ENCODE measurements at regions of chr5 and their contacts with region 1.

Region 1: GRCh38 chr5:176530983-176531821 is 6.0 kb downstream of the RNF44 start:
- DNase-seq: peak; percentile 85
- H3K4me3 ChIP-seq: no peak overlapping the region
- H3K27ac ChIP-seq: peak overlapping the region in 1 of 2 experiments; percentile 79; a peak in 2 of 4 replicates
- H3K4me1 ChIP-seq: peaks cover 13 to 52% of the 10 kb centered on the region in 2 experiments; a peak in 3 of 4 replicates
- H3K27me3 ChIP-seq: no peaks in the 10 kb centered on the region
- CTCF ChIP-seq: no peak
- EP300 ChIP-seq: peak in 1 of 2 experiments; percentile 16; a peak in 1 of 4 replicates
- RAD21 ChIP-seq: no peak

Region 2: DNA sequence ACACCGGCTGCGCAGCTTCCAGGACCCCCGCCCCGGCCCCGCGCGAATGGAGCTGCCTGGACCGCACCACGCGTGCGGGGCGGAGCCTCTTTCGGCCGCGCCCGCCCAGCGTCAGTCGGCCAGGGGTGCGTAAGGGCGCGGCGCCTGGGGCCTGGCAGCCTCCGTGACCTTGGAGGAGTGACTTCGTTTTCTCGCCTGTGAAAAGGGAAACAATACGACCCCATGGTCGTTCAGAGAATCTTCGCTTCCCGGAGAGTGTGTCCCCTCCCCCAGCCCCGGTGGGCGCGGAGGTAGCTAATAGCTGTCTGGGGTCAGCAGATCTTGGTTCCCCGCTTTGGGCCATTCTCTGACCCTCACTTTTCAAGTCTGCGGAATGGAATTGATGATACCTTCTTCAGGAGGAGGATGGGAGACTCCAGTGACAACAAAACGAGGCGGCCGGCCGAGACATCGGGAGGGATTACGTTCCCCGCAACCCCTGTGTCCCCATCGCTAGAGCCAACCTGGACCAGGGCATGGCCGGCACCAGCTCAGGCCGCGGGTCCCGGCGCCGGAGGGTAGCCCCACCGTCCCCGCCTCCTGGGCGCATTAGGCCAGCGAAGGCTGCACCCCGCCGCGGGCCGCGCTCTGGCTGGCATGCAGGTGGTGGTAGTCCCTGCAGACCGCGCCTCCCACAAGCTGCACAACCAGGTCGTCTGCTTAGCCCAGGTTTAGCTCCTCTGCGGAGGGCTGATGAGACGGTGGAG is 12.4 kb after region 1 on chr5:
- CTCF ChIA-PET with region 1: interaction called, 12 read pairs
- POLR2A ChIA-PET with region 1: interaction called, 6 read pairs
- DNase-seq: peak; percentile 89
- H3K4me3 ChIP-seq: peak overlapping the region; percentile 65 to 76
- H3K27ac ChIP-seq: peak overlapping the region in 1 of 2 experiments; percentile 72; a peak in 2 of 4 replicates
- H3K4me1 ChIP-seq: peaks cover 10 to 14% of the 10 kb centered on the region in 2 experiments; a peak in 2 of 4 replicates
- H3K27me3 ChIP-seq: no peaks in the 10 kb centered on the region
- CTCF ChIP-seq: no peak
- EP300 ChIP-seq: no peak
- RAD21 ChIP-seq: no peak

Region 3: DNA sequence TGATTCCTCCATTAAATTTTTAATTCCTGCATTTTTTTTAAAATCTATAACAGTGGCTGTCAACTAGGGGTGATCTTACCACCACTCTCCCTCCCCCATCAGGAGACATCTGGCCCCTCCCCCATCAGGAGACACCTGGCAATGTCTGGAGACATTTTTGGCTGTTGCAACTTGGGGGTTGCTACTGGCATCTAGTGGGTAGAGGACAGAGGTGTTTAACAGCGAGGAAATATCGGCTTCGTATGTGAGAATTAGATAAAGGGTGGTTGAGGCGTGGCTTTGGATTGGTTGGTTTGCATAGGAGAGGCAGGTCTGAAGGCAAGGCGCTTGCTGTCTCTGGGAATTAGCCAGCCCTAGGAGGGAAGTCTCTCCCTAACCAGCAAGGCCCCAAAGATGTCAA is 28.5 kb after region 1 on chr5:
- CTCF ChIA-PET with region 1: no interaction called
- POLR2A ChIA-PET with region 1: no interaction called
- DNase-seq: no peak
- H3K4me3 ChIP-seq: no peak overlapping the region
- H3K27ac ChIP-seq: no peak overlapping the region
- H3K4me1 ChIP-seq: no peaks in the 10 kb centered on the region
- H3K27me3 ChIP-seq: no peaks in the 10 kb centered on the region
- CTCF ChIP-seq: no peak
- EP300 ChIP-seq: no peak
- RAD21 ChIP-seq: no peak

Region 4: GRCh38 chr5:176609724-176610434 is 78.7 kb after region 1 on chr5 and contains the start of gene GPRIN1:
- CTCF ChIA-PET with region 1: no interaction called
- POLR2A ChIA-PET with region 1: no interaction called
- DNase-seq: peak; percentile 98
- H3K4me3 ChIP-seq: peak within 1 kb of the TSS; percentile 68 to 69
- H3K27ac ChIP-seq: peak within 1 kb of the TSS in 1 of 2 experiments; percentile 83; a peak in 2 of 4 replicates
- H3K4me1 ChIP-seq: peaks cover 3 to 49% of the 10 kb centered on the region in 2 experiments; a peak in 2 of 4 replicates
- H3K27me3 ChIP-seq: no peaks in the 10 kb centered on the region
- CTCF ChIP-seq: peak; percentile 41; the same call in 1 of the 2 replicates
- EP300 ChIP-seq: no peak
- RAD21 ChIP-seq: peak; percentile 42
- polyA plus RNA-seq, gene GPRIN1: 5.9 and 6.6 TPM in 2 replicates